Tibial artery (tissue), 4 donors: ENCODE measurements at regions of chr4 and their contacts with region 1.

Region 1: GRCh38 chr4:127965062-127965802 is at the starts of genes ABHD18 and MFSD8:
- DNase-seq: peak; percentile 99 to 100
- H3K4me3 ChIP-seq: peak within 1 kb of the TSS; percentile 59 to 90
- H3K27ac ChIP-seq: peak within 1 kb of the TSS; percentile 94 to 98
- H3K4me1 ChIP-seq: peaks cover 0 to 26% (median 8%) of the 10 kb centered on the region in 4 donors
- H3K27me3 ChIP-seq: no peaks in the 10 kb centered on the region
- CTCF ChIP-seq: peak; percentile 49 to 52

Region 2: GRCh38 chr4:127782274-127783025 is 182.8 kb before region 1 on chr4 and contains the start of gene HSPA4L:
- intact Hi-C with region 1: loop called (anchors 10 kb)
- DNase-seq: peak; percentile 41 to 85
- H3K4me3 ChIP-seq: peak within 1 kb of the TSS; percentile 69 to 83
- H3K27ac ChIP-seq: peak within 1 kb of the TSS; percentile 86 to 87
- H3K4me1 ChIP-seq: peaks cover 0 to 10% (median 4%) of the 10 kb centered on the region in 4 donors
- H3K27me3 ChIP-seq: no peaks in the 10 kb centered on the region
- CTCF ChIP-seq: peak; percentile 39 to 42

Region 3: GRCh38 chr4:127997534-127998388 is 32.5 kb after region 1 on chr4:
- intact Hi-C with region 1: no loop called
- DNase-seq: no peak
- H3K4me3 ChIP-seq: no peak overlapping the region
- H3K27ac ChIP-seq: no peak overlapping the region
- H3K4me1 ChIP-seq: no peaks in the 10 kb centered on the region
- H3K27me3 ChIP-seq: no peaks in the 10 kb centered on the region
- CTCF ChIP-seq: no peak

Region 4: DNA sequence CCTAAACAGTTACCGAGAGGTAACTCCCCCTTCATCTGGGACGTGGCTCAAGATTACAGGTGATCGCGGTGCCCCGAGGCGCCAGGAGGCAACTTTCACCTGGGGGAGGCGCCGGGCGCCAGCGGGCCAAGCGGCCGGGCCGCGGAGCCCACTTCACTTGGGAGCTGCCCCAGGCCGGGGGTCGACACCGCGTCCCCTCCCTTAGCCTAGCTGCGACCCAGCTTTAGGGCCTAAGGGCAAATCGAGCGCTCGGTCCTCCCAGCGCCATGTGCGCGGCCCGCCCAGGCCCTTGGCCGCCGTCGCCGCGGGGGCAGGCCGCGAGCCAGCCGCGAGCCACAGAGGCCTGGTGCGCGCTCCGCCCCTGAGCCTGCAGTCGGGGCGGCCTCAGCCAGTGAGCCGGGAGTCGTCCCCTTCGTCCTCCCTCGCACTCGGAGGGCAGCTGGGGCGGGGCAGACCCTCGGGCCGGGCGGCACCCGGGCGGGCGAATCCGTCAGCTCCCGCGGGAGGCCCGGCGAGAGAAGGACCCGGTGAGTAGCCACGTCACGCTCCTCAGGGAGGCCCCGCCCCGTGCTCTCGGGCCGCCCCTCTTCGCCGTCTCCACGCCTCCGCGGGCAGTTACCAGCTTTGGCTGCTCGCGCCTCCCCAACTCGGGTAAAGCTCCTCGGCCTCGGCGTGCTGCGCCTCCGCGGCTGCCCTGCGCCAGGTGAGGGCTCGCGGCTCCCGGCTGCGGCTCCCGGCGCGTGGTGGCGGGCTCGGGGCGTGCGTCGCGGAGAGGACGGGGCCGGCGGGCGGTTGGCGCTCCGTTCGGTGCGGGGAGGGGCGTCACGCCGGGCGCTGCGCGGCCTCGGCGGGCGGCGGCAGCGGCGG is 95.7 kb after region 1 on chr4 and contains the start of gene LARP1B:
- intact Hi-C with region 1: loop called (anchors 5 kb)
- DNase-seq: peak; percentile 94 to 98
- H3K4me3 ChIP-seq: peak within 1 kb of the TSS; percentile 65 to 95
- H3K27ac ChIP-seq: peak within 1 kb of the TSS; percentile 91 to 100
- H3K4me1 ChIP-seq: peaks cover 0 to 14% (median 5%) of the 10 kb centered on the region in 4 donors
- H3K27me3 ChIP-seq: no peaks in the 10 kb centered on the region
- CTCF ChIP-seq: no peak